ENCODE measurements at regions of chr7 and their contacts with region 1.

Region 1: DNA sequence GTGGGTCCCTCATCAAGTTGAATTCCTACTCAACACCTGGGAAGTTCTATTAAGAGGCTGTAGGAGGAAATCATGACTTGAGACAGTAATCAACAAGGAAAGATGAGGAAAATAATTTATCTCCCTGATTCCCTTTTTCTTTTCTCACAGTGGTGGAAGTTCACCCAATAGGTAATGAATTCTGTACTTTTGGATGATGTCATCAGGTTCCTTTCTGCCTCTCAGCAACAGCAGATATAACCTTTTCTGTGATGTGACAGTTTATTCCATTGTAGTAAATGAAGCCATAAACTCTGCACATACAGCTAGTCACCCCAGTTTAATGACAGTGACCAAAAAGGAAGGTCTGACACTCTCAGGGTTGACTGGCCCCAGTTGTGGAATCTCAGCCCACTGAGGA is 1265.0 kb downstream of the NXPH1 start:
- DNase-seq: no peak
- ATAC-seq: no peak
- H3K4me3 ChIP-seq: no peak overlapping the region
- H3K27ac ChIP-seq: no peak overlapping the region
- H3K4me1 ChIP-seq: no peaks in the 10 kb centered on the region
- H3K27me3 ChIP-seq: no peaks in the 10 kb centered on the region
- CTCF ChIP-seq: no peak

Region 2: DNA sequence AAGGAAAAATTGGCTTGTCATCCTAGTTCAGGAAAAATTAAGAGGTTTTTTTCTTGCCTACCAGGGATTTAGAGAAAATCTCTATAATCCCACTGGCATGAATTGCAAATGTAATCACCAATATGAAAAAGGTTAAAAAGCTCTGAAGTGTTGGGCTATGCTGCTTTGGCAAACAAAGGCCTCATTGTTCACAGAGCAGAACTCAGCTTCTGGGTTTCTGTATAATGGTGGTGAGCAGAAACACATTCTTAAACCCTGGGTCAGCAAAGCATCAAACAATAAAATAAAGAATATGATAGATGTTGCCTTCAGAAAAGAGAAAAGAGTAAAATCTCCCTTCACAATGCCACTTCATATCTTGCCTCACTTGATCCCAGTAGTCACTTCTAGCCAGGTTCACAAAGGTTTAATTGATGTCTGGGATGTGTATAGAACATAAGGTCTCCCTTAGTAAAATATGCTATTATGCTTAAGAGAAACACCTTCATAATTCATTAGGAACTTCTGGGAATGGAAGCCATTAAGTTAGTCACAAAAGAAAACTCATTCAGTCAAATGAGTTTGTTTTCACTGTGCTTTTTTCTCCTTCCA is 19.8 kb after region 1 on chr7:
- intact Hi-C with region 1: loop called in 1 of 10 experiments (anchors 2 kb)
- DNase-seq: no peak
- ATAC-seq: no peak
- H3K4me3 ChIP-seq: no peak overlapping the region
- H3K27ac ChIP-seq: no peak overlapping the region
- H3K4me1 ChIP-seq: no peaks in the 10 kb centered on the region
- H3K27me3 ChIP-seq: no peaks in the 10 kb centered on the region
- CTCF ChIP-seq: no peak

Measured in heart right ventricle (tissue), 16 donors.